ENCODE measurements at regions of chr15 and their contacts with region 1.

Region 1: DNA sequence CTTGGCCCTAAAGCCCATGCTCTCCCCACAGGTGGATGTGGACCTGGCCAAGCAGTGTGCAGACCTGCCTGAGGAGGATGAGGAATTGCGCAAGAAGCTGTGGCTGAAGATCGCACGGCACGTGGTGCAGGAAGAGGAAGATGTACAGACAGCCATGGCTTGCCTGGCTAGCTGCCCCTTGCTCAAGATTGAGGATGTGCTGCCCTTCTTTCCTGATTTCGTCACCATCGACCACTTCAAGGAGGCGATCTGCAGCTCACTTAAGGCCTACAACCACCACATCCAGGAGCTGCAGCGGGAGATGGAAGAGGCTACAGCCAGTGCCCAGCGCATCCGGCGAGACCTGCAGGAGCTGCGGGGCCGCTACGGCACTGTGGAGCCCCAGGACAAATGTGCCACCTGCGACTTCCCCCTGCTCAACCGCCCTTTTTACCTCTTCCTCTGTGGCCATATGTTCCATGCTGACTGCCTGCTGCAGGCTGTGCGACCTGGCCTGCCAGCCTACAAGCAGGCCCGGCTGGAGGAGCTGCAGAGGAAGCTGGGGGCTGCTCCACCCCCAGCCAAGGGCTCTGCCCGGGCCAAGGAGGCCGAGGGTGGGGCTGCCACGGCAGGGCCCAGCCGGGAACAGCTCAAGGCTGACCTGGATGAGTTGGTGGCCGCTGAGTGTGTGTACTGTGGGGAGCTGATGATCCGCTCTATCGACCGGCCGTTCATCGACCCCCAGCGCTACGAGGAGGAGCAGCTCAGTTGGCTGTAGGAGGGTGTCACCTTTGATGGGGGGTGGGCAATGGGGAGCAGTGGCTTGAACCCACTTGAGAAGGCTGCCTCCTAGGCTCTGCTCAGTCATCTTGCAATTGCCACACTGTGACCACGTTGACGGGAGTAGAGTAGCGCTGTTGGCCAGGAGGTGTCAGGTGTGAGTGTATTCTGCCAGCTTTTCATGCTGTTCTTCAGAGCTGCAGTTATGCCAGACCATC is 8.6 kb downstream of the VPS18 start:
- DNase-seq: peak in 4 of 10 donors; percentile 26 to 90 (median 57)

Region 2: DNA sequence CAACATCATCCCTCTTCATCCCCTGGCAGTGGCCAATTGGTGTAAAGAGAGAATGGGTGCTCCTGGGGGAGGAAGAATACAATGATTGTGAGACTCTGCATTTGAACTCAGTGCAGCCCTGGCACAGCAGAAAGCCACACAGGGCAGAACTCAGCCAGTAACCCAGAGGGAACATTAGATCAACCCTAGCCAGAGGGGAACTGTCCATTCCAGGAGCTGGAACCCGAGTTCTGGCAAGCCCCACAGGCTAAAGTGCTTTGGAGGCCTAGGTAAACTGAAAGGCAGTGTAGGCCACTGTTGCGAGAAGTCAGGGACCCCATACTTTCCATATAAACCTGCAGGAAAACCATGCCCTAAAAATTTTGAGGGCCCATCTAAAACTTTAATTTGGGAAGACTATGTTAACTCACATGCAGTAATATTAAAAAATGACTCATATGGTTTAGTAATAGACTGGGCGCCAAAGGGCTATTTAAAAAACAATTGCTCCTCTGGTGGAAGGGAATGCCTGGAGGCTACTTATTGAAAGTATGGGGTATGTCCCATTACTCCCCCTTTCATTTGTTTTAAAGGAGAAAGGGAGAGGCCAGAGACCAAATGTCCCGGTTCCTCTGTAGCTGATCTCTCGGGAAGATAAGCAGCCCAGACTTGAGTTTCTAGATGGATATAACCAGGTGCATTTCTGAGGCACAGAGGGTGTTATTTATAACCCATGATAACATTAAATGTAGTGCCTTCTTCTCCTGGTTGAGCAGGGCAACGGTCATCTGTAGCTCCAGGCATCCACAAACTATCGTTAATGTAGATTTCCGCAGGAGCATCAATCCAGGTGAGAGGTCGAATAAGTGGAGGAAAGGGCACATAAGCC is 213.7 kb before region 1 on chr15:
- intact Hi-C with region 1: no loop called
- DNase-seq: no peak

Region 3: GRCh38 chr15:41022487-41023090 is 119.7 kb after region 1 on chr15:
- intact Hi-C with region 1: loop called (anchors 1 kb)
- DNase-seq: peak in 5 of 10 donors; percentile 30 to 88 (median 45)

Region 4: DNA sequence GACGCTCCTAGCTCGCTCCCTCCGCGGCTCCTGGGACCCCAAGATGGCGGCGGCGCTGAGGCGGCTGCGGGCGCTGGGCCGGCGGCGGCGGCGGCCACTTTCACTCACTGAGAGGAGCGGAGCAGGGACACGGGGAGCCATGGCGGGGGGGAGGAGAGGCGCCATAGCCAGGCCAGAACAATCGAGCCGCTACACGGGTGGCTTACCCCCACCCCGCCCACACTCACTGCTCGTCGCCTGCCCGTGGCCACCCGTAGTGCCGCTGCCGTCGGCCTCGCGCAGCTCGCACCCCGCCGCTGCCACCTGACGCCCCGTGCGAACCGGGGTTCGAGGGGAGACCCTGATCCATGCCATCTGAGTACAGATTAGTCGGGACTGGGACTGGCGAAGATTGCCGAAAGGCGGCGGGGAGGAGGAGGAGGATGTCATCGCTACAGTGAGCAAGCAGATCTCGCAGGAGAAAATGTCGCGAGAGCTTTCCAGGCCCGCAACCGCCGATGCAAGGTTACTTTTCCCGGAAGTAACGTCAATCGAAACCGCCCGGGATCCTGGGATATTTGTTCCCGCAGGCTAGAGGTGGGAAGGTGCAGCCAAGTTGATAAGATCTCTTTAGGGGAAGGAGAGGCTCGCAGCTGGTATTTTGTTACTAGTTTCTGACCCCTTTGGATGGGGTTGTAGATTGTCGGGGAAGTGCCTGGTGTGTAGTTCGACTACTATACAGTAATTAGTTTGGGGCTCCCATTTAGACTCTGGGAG is 213.4 kb after region 1 on chr15 and contains the start of gene INO80:
- intact Hi-C with region 1: loop called (anchors 5 kb)
- DNase-seq: peak; percentile 91 to 99 (median 96)

Region 5: DNA sequence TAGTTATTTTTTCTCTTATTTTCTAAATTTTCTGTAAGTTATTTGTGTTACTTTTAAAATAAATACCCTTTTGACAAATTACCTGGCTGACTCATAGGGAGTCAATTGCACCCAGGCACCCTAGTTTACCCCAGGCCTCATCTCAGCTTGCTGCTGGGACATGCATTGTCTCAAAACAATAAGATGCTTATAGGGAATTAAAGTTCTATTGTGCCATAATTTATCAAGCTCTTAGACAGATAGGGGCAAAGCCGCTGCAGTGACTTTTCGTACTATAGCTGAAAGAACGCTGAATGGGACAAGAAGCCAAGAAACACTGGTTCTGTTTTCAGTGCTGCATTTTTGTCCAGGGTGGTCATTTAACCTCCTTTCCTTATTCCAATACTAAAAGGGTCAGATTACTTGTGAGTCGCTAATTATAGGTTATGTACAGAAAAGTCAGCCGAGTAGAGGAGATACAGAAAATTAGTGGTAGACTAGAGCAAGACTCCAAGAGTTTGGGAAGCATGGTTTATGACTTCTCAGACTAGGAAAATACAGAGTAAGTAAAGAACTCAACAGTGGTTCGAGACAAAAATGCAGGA is 277.4 kb after region 1 on chr15:
- intact Hi-C with region 1: loop called (anchors 1 kb)
- DNase-seq: no peak

Measured in posterior cingulate gyrus (tissue), 11 donors.